A549 (cell line): ENCODE measurements at regions of chr11 and their contacts with region 1.

Region 1: GRCh38 chr11:9613118-9613829 is 39.8 kb downstream of the WEE1 start:
- DNase-seq: peak; percentile 97
- ATAC-seq: peak; percentile 87 to 88
- H3K4me3 ChIP-seq: peak overlapping the region; percentile 42
- H3K27ac ChIP-seq: peak overlapping the region; percentile 94 to 97
- H3K4me1 ChIP-seq: peaks cover 27% of the 10 kb centered on the region
- CTCF ChIP-seq: peak; percentile 87
- EP300 ChIP-seq: peak in 1 of 2 experiments; percentile 55; a peak in 1 of 5 replicates
- POLR2A ChIP-seq: no peak; the same call in 1 of the 2 replicates
- RAD21 ChIP-seq: peak; percentile 84 to 87

Region 2: DNA sequence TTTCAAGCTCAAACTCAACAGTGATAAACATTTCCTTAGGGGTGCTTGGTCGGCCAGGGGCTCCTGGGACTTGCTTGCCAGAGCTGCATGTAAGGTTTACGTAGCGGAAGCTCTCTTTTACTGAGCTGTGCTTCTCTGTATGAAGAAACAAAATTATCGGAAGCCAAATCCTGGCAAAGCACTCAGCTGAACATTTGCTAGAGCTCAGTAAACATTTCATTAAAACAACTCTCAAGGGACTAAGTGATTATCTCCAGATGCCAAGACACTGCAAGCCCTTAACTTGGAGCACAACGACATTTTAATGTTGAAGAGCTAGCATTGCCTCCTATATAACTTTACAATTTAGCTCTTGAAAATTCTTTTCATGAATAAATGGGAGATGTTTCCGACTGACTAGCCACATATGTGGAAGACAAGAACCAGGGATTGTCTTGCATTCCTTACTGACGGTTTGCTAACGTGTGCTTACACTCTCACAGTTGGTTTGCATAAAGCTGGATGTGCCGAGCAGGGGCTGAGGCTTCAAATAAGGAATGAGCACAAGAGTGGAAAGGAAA is 565.2 kb before region 1 on chr11:
- CTCF ChIA-PET with region 1: no interaction called
- POLR2A ChIA-PET with region 1: no interaction called
- DNase-seq: no peak
- ATAC-seq: no peak
- H3K4me3 ChIP-seq: no peak overlapping the region
- H3K27ac ChIP-seq: no peak overlapping the region
- H3K4me1 ChIP-seq: no peaks in the 10 kb centered on the region
- CTCF ChIP-seq: no peak
- EP300 ChIP-seq: no peak
- POLR2A ChIP-seq: no peak
- RAD21 ChIP-seq: no peak

Region 3: DNA sequence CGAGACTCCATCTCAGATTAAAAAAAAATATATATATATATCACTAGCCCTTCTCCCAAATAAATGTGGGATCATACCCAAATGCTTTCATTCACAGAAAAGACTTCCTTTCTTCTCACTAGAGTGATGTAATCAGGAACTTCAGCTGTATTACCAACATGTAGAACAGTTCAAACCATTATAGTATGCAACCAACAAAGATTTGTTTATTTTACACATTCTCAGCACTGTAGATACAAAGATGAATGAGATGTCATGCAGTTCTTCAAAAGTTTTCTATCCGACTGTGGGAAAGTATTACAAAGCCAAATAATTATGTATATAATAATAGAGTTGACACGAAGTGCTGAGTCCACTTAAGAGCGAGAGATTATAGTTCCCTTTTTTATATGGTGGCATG is 174.7 kb before region 1 on chr11:
- CTCF ChIA-PET with region 1: no interaction called
- POLR2A ChIA-PET with region 1: no interaction called
- DNase-seq: no peak
- ATAC-seq: no peak
- H3K4me3 ChIP-seq: no peak overlapping the region
- H3K27ac ChIP-seq: no peak overlapping the region
- H3K4me1 ChIP-seq: no peaks in the 10 kb centered on the region
- CTCF ChIP-seq: no peak
- EP300 ChIP-seq: no peak
- POLR2A ChIP-seq: no peak
- RAD21 ChIP-seq: no peak

Region 4: GRCh38 chr11:9527481-9528140 is 85.7 kb before region 1 on chr11:
- CTCF ChIA-PET with region 1: interaction called, 15 read pairs
- POLR2A ChIA-PET with region 1: no interaction called
- DNase-seq: peak in 1 of 2 experiments; percentile 39
- ATAC-seq: peak; percentile 54 to 60; a peak in 4 of 6 replicates
- H3K4me3 ChIP-seq: no peak overlapping the region
- H3K27ac ChIP-seq: peak overlapping the region; percentile 69 to 81
- H3K4me1 ChIP-seq: peaks cover 42% of the 10 kb centered on the region
- CTCF ChIP-seq: no peak
- EP300 ChIP-seq: no peak
- POLR2A ChIP-seq: no peak
- RAD21 ChIP-seq: no peak

Region 5: GRCh38 chr11:9573052-9573774 is 40.1 kb before region 1 on chr11 and contains the start of gene WEE1:
- CTCF ChIA-PET with region 1: interaction called, 38 read pairs
- POLR2A ChIA-PET with region 1: interaction called, 33 read pairs
- DNase-seq: peak; percentile 96 to 99
- ATAC-seq: peak; percentile 82 to 93
- H3K4me3 ChIP-seq: peak within 1 kb of the TSS; percentile 89
- H3K27ac ChIP-seq: peak within 1 kb of the TSS; percentile 95
- H3K4me1 ChIP-seq: peaks cover 53% of the 10 kb centered on the region
- CTCF ChIP-seq: no peak
- EP300 ChIP-seq: no peak
- POLR2A ChIP-seq: peak; percentile 47
- RAD21 ChIP-seq: no peak
- polyA plus RNA-seq, gene WEE1: 32.8 and 41.3 TPM in 2 replicates

Region 6: GRCh38 chr11:9626496-9627394 is 13.5 kb after region 1 on chr11:
- CTCF ChIA-PET with region 1: interaction called, 10 read pairs
- POLR2A ChIA-PET with region 1: no interaction called
- DNase-seq: no peak
- ATAC-seq: no peak
- H3K4me3 ChIP-seq: no peak overlapping the region
- H3K27ac ChIP-seq: no peak overlapping the region
- H3K4me1 ChIP-seq: no peaks in the 10 kb centered on the region
- CTCF ChIP-seq: no peak
- EP300 ChIP-seq: no peak
- POLR2A ChIP-seq: no peak
- RAD21 ChIP-seq: no peak

Region 7: DNA sequence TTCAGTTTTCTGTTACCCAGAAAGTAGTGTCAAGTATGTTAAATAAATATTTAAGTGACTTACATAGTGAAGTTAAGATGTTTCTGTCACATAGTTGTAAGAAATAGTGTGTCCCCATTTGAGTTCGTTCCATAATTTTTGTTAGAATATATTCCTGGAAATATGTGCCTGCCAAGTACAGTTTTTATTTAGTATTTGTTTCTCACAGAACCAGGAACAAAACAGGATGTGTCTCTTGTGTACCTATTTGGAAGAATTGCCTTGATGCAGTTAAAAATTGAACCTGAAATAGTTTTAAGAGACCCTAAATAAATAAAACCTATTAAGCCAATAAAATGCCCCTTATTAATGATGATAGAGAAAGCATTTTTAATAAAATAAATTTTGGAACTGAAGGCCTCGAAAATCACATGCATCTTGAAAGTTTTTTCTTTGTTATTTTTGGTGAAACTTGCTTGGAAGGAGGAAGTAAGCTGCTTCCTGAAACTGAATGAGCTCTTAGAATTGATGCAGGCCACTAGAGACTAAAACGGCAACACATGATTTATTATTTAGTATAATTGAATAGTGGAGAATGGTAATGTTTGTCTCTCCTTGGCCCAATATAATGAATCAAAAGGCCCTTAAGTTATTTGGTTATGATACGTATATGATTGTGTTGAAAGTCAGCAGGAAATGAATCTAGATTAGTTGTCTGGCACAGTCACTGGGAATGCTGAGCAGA is 106.5 kb after region 1 on chr11:
- CTCF ChIA-PET with region 1: no interaction called
- POLR2A ChIA-PET with region 1: no interaction called
- DNase-seq: no peak
- ATAC-seq: no peak
- H3K4me3 ChIP-seq: no peak overlapping the region
- H3K27ac ChIP-seq: no peak overlapping the region
- H3K4me1 ChIP-seq: peaks cover 23% of the 10 kb centered on the region
- CTCF ChIP-seq: no peak
- EP300 ChIP-seq: no peak
- POLR2A ChIP-seq: no peak
- RAD21 ChIP-seq: no peak

Region 8: GRCh38 chr11:9748361-9748970 is 135.2 kb after region 1 on chr11:
- CTCF ChIA-PET with region 1: interaction called, 100 read pairs
- POLR2A ChIA-PET with region 1: interaction called, 14 read pairs
- DNase-seq: peak; percentile 85 to 89
- ATAC-seq: peak; percentile 96 to 97
- H3K4me3 ChIP-seq: no peak overlapping the region
- H3K27ac ChIP-seq: peak overlapping the region in 1 of 2 experiments; percentile 50; a peak in 2 of 6 replicates
- H3K4me1 ChIP-seq: peaks cover 21% of the 10 kb centered on the region
- CTCF ChIP-seq: peak; percentile 88
- EP300 ChIP-seq: no peak
- POLR2A ChIP-seq: no peak
- RAD21 ChIP-seq: peak; percentile 93 to 98